Transverse colon (tissue), 4 donors: ENCODE measurements at regions of chr2 and their contacts with region 1.

Region 1: GRCh38 chr2:218710687-218711549 is at the start of gene TTLL4:
- DNase-seq: peak; percentile 98
- H3K4me3 ChIP-seq: peak within 1 kb of the TSS; percentile 56 to 83 (median 77)
- H3K27ac ChIP-seq: peak within 1 kb of the TSS; percentile 90 to 95 (median 93)
- H3K4me1 ChIP-seq: peaks cover 0 to 19% (median 11%) of the 10 kb centered on the region in 4 donors
- H3K27me3 ChIP-seq: no peaks in the 10 kb centered on the region
- CTCF ChIP-seq: peak; percentile 76 to 98 (median 90)
- EP300 ChIP-seq: no peak
- POLR2A ChIP-seq: peak; percentile 68
- total RNA-seq, gene TTLL4: 6.0 to 26.0 (median 15.9) TPM

Region 2: DNA sequence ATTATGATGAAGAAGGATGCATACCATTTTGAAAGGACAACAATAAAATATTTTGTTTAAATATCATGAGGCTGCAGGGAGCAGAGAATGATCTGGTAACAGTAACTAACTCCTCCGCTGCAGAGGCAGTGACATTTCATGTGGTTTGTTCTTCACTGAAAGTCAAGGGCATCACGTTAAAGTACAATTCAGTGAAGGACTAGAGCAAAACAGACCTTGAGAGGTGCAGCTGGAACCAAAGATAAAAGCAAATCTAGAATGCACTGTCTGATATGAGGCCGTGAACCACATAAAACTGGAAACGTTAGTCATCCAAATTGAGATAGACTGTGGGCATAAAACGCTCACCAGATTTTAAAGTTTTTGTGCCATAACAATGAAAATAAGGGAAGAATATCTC is 1328.1 kb before region 1 on chr2:
- in situ Hi-C with region 1: no loop called
- intact Hi-C with region 1: no loop called
- DNase-seq: no peak
- H3K4me3 ChIP-seq: no peak overlapping the region
- H3K27ac ChIP-seq: peak overlapping the region in 1 of 4 donors; percentile 31
- H3K4me1 ChIP-seq: no peaks in the 10 kb centered on the region
- H3K27me3 ChIP-seq: no peaks in the 10 kb centered on the region
- CTCF ChIP-seq: no peak
- EP300 ChIP-seq: no peak
- POLR2A ChIP-seq: no peak

Region 3: GRCh38 chr2:217953531-217953932 is 757.4 kb before region 1 on chr2:
- in situ Hi-C with region 1: no loop called
- intact Hi-C with region 1: loop called (anchors 5 kb)
- DNase-seq: no peak
- H3K4me3 ChIP-seq: no peak overlapping the region
- H3K27ac ChIP-seq: peak overlapping the region; percentile 78 to 95 (median 86)
- H3K4me1 ChIP-seq: peaks cover 39 to 65% (median 46%) of the 10 kb centered on the region in 4 donors
- H3K27me3 ChIP-seq: no peaks in the 10 kb centered on the region
- CTCF ChIP-seq: no peak
- EP300 ChIP-seq: no peak
- POLR2A ChIP-seq: no peak